ENCODE measurements at regions of chr3 and their contacts with region 1.

Region 1: DNA sequence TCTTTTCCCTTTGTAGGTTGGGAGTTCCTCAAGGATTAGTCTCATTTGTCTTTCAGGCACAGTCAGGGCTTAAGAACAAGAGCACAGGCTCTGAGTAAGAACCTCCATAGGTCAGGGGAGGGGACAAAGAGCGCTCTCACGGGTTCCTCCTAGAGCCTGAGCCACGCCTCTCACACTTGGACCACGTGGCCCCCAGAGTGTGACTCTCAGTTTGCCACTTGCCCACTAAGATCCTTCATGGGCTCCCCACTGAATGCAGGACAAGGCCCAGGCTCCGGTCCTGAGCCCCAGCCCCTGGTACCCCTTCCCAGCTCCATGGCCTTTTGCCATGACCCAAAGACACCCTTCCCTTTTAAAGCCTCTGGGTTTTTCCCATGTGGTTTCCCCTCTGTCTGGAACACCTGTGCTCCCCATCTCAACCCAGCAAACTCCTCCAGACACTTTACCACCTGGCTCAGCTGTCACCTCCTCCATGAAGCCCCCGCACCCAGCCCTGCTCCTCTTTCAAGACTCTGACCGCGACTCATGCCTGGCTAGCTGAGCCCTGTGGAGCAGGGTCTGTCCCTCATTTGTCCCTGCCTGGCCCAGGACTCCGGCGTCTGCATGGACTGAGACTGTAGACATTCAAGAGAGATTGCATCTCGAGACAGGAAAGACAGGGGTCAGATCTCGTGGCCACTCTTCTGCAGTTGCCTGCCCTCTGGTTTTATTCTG is 32.7 kb downstream of the IQSEC1 start:
- DNase-seq: peak; percentile 74 to 77
- ATAC-seq: peak; percentile 97 to 98 (median 98)
- H3K4me3 ChIP-seq: no peak overlapping the region
- H3K4me3 Mint-ChIP-seq: peak overlapping the region; percentile 82
- H3K27ac ChIP-seq: peak overlapping the region; percentile 58
- H3K27ac Mint-ChIP-seq: peak overlapping the region; percentile 89 to 94
- H3K4me1 ChIP-seq: peaks cover 42% of the 10 kb centered on the region
- H3K4me1 Mint-ChIP-seq: peaks cover 24 to 45% of the 10 kb centered on the region in 2 donors
- H3K27me3 ChIP-seq: no peaks in the 10 kb centered on the region
- H3K27me3 Mint-ChIP-seq: no peaks in the 10 kb centered on the region
- CTCF ChIP-seq: no peak

Region 2: GRCh38 chr3:13069495-13069894 is 29.0 kb after region 1 on chr3:
- intact Hi-C with region 1: loop called (anchors 2 kb)
- DNase-seq: peak; percentile 62 to 75
- ATAC-seq: peak; percentile 71 to 86 (median 79)
- H3K4me3 ChIP-seq: no peak overlapping the region
- H3K4me3 Mint-ChIP-seq: peak overlapping the region; percentile 69
- H3K27ac ChIP-seq: peak overlapping the region; percentile 80
- H3K27ac Mint-ChIP-seq: peak overlapping the region; percentile 93 to 94
- H3K4me1 ChIP-seq: peaks cover 75% of the 10 kb centered on the region
- H3K4me1 Mint-ChIP-seq: peaks cover 55 to 70% of the 10 kb centered on the region in 2 donors
- H3K27me3 ChIP-seq: no peaks in the 10 kb centered on the region
- H3K27me3 Mint-ChIP-seq: peaks cover 0 to 5% of the 10 kb centered on the region in 2 donors
- CTCF ChIP-seq: no peak